Right cardiac atrium (tissue), 5 donors: ENCODE measurements at regions of chr9 and their contacts with region 1.

Region 1: GRCh38 chr9:96449845-96450612 is at the start of gene HABP4:
- DNase-seq: peak; percentile 98 to 100 (median 99)
- ATAC-seq: peak; percentile 99
- H3K4me3 ChIP-seq: peak within 1 kb of the TSS; percentile 70
- H3K27ac ChIP-seq: peak within 1 kb of the TSS; percentile 89
- H3K4me1 ChIP-seq: no peaks in the 10 kb centered on the region
- H3K27me3 ChIP-seq: no peaks in the 10 kb centered on the region
- total RNA-seq, gene HABP4: 17.1 to 21.7 (median 18.5) TPM

Region 2: DNA sequence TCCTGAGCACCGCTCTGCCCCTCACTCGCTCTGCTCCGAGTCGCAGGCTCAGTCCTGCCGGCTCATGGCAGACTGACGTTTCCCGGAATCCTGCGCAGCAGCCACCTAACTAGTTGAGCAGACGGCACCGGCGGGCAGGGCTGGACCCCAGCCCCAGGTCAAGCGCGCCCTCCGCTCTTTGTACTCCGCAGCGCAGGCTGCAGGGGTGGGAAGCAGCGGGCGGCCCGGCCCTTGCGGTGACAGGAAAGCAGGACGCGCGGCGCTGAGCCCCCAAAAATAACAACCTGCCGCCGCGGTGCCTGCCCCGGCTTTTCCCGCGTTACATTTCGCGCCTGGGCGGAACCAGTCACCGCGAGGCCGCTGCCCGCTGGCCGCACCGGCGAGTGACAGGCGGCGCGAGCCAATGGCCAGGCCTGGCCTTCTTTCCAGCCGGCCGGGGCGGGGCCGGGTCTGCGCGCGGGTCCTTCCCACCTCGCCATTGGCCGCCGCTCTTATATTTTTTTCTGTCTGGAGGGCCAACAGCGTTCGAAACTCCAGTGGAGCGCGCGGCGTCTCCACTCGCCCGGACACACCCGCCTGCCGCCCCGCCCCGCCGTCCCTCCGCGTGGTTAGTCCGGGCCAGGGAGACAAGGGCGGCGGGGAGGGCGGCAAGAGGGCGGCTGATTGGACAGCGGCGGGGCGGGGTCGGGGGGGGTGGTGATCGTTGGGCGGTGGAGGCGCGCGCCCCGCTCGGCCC is 31.8 kb before region 1 on chr9 and contains the start of gene ZNF367:
- intact Hi-C with region 1: loop called in 1 of 4 experiments (anchors 2 kb)
- DNase-seq: peak; percentile 99
- ATAC-seq: peak; percentile 95 to 96
- H3K4me3 ChIP-seq: peak within 1 kb of the TSS; percentile 89
- H3K27ac ChIP-seq: peak within 1 kb of the TSS; percentile 96
- H3K4me1 ChIP-seq: no peaks in the 10 kb centered on the region
- H3K27me3 ChIP-seq: no peaks in the 10 kb centered on the region
- total RNA-seq, gene ZNF367: 1.3 to 1.7 (median 1.5) TPM

Region 3: DNA sequence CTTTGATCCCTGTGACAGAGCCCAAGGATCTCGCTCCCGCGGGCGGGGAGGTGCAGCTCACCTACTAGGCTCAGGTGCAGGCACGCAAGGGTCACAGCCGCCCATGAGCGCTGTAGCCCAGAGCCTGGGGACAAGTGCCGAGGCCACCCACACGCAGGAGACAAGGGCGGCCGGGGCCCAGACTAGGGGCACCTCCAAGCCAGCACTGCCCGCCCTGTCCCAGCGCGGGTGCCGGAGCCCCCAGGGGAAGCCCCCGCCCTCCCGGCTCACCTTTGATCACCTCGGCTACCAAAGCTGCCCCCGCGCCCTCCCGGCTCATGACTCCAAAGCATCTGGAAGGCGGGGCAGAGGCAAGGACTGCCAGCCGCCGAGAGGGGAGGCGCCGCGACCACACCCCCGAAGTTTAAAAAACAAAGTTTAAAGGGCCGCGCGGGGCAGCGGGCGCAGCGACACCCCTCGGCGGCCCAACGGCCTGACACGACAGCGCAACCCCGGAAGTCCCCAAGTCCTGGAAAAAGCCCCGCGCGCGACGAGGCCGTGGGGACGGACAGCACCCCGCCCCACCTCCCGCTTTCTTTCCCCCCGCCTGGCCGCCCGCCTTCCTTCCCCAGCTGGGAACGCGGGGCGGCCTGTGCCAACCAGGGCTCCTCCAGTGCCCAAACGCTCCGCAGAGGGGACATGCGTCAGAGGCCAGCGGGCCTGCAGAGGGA is 116.6 kb after region 1 on chr9:
- intact Hi-C with region 1: loop called in 1 of 4 experiments (anchors 10 kb)
- DNase-seq: peak; percentile 78 to 93 (median 93)
- ATAC-seq: peak; percentile 94 to 95
- H3K4me3 ChIP-seq: peak overlapping the region; percentile 75
- H3K27ac ChIP-seq: peak overlapping the region; percentile 66
- H3K4me1 ChIP-seq: no peaks in the 10 kb centered on the region
- H3K27me3 ChIP-seq: no peaks in the 10 kb centered on the region

Region 4: DNA sequence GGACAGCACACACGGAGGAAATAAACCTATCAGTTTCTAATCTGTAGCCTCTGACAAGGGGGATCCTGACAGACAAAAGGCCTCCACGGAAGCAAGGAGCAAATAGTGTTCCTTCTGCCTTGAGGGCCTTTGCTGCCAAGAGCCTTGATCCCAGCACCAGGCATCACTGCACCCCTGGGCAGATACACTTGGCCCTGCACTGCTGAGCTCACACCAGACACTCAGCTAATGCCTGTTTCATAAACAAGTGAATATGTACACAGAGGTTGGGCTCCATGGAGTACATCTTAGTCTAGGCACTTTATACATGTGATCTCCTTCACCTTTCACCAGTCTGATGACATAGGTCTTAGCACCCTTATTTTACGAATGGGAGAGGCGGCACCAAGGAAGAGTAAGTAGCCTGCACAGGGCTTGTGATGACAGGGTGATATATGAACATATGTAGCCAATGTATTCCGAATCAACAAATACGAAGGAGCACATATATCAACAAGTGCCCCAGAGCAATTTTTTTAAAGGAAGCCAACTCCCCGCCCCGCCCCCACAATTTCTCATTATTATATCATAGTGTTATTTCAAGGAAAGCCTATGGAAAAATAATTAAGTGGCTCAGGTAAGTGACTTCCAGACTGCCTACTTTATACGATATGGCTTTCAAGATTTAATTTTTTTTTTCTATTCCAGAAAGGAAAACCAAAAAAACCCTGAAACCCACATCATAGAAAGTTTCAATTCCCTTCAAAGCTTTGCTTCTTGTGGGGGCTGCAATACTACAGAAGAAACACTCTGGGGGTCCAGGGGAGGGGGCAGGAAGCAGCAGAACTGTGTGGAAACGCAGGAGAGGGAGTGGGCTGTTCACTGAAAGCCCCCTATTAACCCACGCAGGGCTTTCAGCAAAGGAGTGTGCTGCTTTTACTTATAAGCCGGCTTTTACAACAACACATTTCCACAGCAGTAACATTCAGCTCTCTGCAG is 137.6 kb after region 1 on chr9:
- intact Hi-C with region 1: no loop called
- DNase-seq: no peak
- ATAC-seq: no peak
- H3K4me3 ChIP-seq: no peak overlapping the region
- H3K27ac ChIP-seq: no peak overlapping the region
- H3K4me1 ChIP-seq: no peaks in the 10 kb centered on the region
- H3K27me3 ChIP-seq: no peaks in the 10 kb centered on the region